Activated CD4-positive, alpha-beta T cell treated with anti-CD3 and anti-CD28 coated beads for 36 hours (primary cell): ENCODE measurements at regions of chr7 and their contacts with region 1.

Region 1: DNA sequence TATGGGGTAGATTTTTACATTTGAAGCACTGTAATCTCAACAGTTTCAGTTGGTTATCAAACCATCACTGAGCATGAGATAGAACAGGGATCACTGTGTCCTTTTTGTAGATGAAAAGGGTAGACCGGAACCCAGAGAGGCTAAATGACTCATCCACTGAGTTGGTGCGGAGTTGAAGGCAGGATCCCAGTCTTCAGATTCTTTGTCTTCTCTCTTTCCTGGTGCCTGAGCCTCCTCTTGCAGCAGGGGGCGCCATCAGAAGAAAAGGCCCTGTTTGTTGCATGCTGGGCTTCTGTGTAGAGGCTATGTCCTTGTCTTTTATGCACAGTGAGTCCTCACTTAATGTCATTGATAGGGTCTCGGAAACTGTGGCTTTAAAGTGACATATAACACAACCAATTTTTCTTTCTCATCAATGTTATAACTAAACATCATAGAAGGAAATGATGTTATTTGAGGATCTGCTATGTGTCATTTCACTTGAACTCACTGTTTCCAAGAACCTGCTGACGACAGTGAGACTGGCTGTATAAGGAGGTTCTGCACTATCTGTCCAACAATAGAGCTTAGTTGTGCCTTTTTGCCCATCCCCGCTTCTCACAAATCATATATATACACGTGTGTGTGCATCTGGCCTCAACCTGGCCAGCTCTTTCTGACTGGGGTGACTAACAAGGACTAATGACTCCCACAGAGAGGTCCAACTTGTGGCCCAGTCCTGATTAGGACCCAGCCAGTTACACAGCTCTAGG is 14.3 kb downstream of the ZNF282 start:
- DNase-seq: peak; percentile 93
- ATAC-seq: peak; percentile 89
- H3K4me3 Mint-ChIP-seq: peak overlapping the region; percentile 38
- H3K27ac Mint-ChIP-seq: peak overlapping the region; percentile 94
- H3K4me1 Mint-ChIP-seq: peaks cover 32% of the 10 kb centered on the region
- H3K27me3 Mint-ChIP-seq: no peaks in the 10 kb centered on the region

Region 2: GRCh38 chr7:149188637-149189259 is 20.9 kb before region 1 on chr7:
- CTCF ChIA-PET with region 1: no interaction called
- POLR2A ChIA-PET with region 1: no interaction called
- intact Hi-C with region 1: no loop called
- DNase-seq: no peak
- ATAC-seq: no peak
- H3K4me3 Mint-ChIP-seq: no peak overlapping the region
- H3K27ac Mint-ChIP-seq: no peak overlapping the region
- H3K4me1 Mint-ChIP-seq: peaks cover 8% of the 10 kb centered on the region
- H3K27me3 Mint-ChIP-seq: no peaks in the 10 kb centered on the region

Region 3: GRCh38 chr7:149245244-149245643 is 35.5 kb after region 1 on chr7:
- CTCF ChIA-PET with region 1: interaction called, 6 read pairs
- POLR2A ChIA-PET with region 1: interaction called, 5 read pairs
- intact Hi-C with region 1: loop called (anchors 1 kb)
- DNase-seq: peak; percentile 79
- ATAC-seq: peak; percentile 85
- H3K4me3 Mint-ChIP-seq: peak overlapping the region; percentile 48
- H3K27ac Mint-ChIP-seq: peak overlapping the region; percentile 96
- H3K4me1 Mint-ChIP-seq: peaks cover 72% of the 10 kb centered on the region
- H3K27me3 Mint-ChIP-seq: no peaks in the 10 kb centered on the region

Region 4: GRCh38 chr7:149279111-149279743 is 69.5 kb after region 1 on chr7:
- CTCF ChIA-PET with region 1: no interaction called
- POLR2A ChIA-PET with region 1: no interaction called
- intact Hi-C with region 1: no loop called
- DNase-seq: no peak
- ATAC-seq: no peak
- H3K4me3 Mint-ChIP-seq: no peak overlapping the region
- H3K27ac Mint-ChIP-seq: no peak overlapping the region
- H3K4me1 Mint-ChIP-seq: peaks cover 6% of the 10 kb centered on the region
- H3K27me3 Mint-ChIP-seq: no peaks in the 10 kb centered on the region